ENCODE measurements at regions of chr11 and their contacts with region 1.

Region 1: DNA sequence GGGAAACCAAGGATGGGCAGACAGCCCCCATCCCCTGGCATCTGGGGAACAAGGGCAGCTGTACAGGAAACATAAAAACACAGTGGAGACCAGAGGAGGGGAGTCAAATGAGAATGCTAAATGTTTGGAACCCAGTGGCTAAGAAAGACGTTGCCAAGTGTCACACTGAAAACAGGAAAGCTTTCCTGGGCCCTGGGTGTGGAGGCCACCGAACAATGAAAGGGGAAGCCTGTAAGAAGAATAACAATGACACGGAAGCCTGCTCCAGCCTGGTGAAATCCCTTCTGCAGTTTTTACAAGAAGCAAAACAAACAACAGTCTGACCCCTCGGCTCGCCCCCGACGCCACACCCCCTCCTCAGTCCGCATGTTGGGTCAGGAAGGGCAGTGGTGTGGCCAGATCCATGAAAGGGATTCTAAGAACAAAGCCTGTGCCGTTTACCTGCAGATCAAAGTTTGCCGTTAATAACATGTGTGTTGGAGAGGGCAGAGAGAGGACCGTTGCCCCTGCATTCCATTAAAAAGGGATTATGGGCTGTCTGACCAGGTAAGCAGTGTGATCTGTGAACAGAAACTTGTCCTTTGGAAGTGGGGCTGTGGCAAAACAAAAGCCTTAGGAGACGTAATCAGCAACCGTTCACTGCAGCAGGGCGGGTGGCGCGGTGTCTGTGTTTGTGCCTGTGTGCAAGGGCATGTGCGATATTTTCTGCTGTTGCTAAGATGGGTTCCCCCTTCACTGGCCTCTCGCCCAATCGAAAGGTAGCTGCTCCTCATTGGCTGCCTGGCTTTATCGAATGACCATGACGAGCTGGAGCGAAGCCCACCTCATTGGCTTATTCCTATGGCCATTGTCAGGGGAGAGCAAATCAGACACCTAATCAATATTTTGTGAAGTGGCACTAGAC is 113.7 kb upstream of the BLID start:
- DNase-seq: no peak
- ATAC-seq: no peak
- H3K4me3 ChIP-seq: no peak overlapping the region
- H3K4me3 Mint-ChIP-seq: no peak overlapping the region
- H3K27ac ChIP-seq: no peak overlapping the region
- H3K27ac Mint-ChIP-seq: no peak overlapping the region
- H3K4me1 ChIP-seq: no peaks in the 10 kb centered on the region
- H3K4me1 Mint-ChIP-seq: no peaks in the 10 kb centered on the region
- H3K27me3 ChIP-seq: no peaks in the 10 kb centered on the region
- H3K27me3 Mint-ChIP-seq: peaks cover 0 to 7% of the 10 kb centered on the region in 2 donors
- CTCF ChIP-seq: no peak

Region 2: DNA sequence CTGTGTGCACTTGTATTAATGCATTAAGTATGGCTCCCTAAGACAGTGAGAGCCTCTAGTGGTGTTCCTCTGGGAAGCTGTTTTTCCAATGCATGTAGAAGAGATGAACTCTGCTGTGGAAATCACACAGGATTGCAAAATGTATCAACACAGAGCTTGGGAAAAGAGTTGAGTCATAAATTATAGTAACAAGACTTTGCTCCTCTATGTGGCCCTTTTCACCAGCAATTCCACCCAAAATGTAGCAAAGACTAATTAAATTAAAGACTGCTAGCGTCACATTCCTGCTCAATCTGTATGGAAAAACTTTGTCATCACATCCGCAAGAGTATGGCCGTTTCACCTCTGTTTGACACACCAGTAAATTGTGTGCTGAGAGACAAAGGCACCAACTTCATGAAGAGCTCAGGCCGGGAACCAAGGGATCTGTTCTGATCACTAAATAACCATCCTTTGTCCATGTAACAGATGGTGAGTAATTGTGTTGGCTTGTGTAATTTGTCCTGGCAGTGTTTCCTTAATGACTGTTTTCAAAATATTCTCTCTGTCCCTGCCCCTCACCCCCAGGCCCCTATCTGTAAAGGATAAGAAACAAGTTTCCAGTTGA is 567.8 kb before region 1 on chr11:
- intact Hi-C with region 1: no loop called
- DNase-seq: no peak
- ATAC-seq: no peak
- H3K4me3 ChIP-seq: no peak overlapping the region
- H3K4me3 Mint-ChIP-seq: no peak overlapping the region
- H3K27ac ChIP-seq: no peak overlapping the region
- H3K27ac Mint-ChIP-seq: no peak overlapping the region
- H3K4me1 ChIP-seq: no peaks in the 10 kb centered on the region
- H3K4me1 Mint-ChIP-seq: no peaks in the 10 kb centered on the region
- H3K27me3 ChIP-seq: no peaks in the 10 kb centered on the region
- H3K27me3 Mint-ChIP-seq: no peaks in the 10 kb centered on the region
- CTCF ChIP-seq: no peak

Region 3: DNA sequence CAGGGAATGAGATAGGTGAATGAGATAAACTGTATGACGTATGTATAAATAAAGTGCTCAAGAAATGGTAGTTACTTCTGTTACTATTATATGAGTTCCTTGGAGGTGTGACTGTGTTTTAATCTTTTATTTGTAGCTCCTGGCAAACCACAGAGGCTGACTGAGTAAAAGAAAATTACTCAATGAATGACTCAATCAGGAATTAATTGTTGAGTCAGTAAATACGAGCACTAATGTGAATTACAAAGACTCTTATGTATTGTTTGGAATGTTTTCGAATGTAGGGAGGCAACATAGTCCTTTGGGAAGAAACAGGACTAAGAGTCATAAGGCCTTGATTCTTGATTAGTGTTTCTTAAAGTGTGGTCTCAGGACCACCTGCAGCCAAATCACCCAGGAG is 62.6 kb before region 1 on chr11:
- intact Hi-C with region 1: loop called (anchors 10 kb)
- DNase-seq: no peak
- ATAC-seq: no peak
- H3K4me3 ChIP-seq: no peak overlapping the region
- H3K4me3 Mint-ChIP-seq: no peak overlapping the region
- H3K27ac ChIP-seq: no peak overlapping the region
- H3K27ac Mint-ChIP-seq: no peak overlapping the region
- H3K4me1 ChIP-seq: no peaks in the 10 kb centered on the region
- H3K4me1 Mint-ChIP-seq: no peaks in the 10 kb centered on the region
- H3K27me3 ChIP-seq: peaks cover 2% of the 10 kb centered on the region
- H3K27me3 Mint-ChIP-seq: peaks cover 0 to 2% of the 10 kb centered on the region in 2 donors
- CTCF ChIP-seq: no peak

Measured in natural killer cell (primary cell).